Activated T-helper 1 cell treated with anti-CD3 and anti-CD28 coated beads, Interleukin-12 subunit alpha, Interleukin-12 subunit beta, Interleukin-2, Interleukin-4 antibody, amounts not matched to agents 30 ng/mL and 10 ng/mL and 1 ng/mL, durations not matched to agents 14 hours and 24 hours and 36 hours (primary cell): ENCODE measurements at regions of chr19 and their contacts with region 1.

Region 1: GRCh38 chr19:12564016-12564664 is 12.9 kb upstream of the ZNF564 start:
- DNase-seq: peak; percentile 86
- H3K4me3 Mint-ChIP-seq: no peak overlapping the region
- H3K27ac Mint-ChIP-seq: no peak overlapping the region
- H3K4me1 Mint-ChIP-seq: peaks cover 8% of the 10 kb centered on the region
- H3K27me3 Mint-ChIP-seq: no peaks in the 10 kb centered on the region

Region 2: GRCh38 chr19:12527034-12527836 is 36.9 kb before region 1 on chr19:
- intact Hi-C with region 1: no loop called
- DNase-seq: no peak
- H3K4me3 Mint-ChIP-seq: no peak overlapping the region
- H3K27ac Mint-ChIP-seq: no peak overlapping the region
- H3K4me1 Mint-ChIP-seq: no peaks in the 10 kb centered on the region
- H3K27me3 Mint-ChIP-seq: no peaks in the 10 kb centered on the region

Region 3: DNA sequence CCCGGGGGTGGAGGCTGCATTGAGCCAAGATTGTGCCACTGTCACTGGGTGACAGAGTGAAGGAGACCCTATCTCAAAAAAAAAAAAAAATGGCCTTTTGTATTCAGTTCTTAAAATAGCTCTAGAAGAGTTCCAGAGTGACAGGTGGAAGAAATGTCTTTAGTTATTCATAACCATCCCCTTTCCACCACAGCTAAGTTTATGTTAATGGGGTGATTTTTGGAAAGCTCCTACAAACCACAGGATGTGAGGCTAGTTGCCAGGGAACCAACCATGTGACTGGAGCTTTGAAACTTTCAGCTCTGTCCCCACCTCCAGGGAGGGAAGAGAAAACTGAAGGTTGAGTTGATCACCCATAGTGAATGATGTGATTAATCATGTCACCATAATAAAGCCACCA is 39.6 kb after region 1 on chr19:
- intact Hi-C with region 1: loop called (anchors 1 kb)
- DNase-seq: peak; percentile 64
- H3K4me3 Mint-ChIP-seq: no peak overlapping the region
- H3K27ac Mint-ChIP-seq: peak overlapping the region; percentile 67
- H3K4me1 Mint-ChIP-seq: peaks cover 11% of the 10 kb centered on the region
- H3K27me3 Mint-ChIP-seq: no peaks in the 10 kb centered on the region

Region 4: DNA sequence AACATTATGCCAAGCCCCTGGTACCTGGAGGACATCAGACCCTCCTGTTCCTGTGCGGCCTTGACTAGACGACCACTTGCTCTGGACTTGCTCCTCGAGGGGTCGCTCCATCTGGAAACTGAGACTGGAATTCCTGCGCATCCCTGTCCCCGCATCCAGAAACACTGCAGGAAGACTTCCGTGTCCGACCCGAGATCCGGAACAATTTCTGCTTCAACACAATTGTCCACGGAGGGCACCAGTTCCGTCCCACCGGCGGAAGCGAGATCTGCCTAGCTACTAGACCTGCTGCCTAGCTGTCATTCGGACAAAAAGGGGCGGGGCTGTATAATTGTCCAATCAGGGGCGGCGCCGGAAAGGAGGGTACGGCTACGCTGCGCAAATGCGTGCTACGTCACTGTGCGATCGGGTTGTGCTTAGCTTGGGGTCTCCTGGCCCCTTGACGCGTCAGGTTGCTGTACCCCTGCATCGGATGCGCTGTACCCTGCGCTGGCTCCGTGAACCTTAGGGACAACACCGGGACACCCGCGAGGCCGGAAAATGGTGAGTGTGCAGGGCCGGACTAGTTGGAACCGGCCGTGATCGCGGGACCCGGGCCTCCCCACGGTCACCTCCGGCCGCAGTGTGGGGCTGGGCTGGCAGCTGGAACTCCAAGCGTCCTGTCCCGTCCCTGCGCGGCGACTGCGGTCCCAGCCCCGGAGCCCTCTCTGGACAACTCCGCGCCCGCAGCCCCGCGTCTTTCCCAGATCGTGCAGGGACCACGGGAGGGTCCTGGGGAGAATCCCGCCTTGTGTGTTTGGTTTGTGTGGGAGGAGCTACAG is 46.6 kb after region 1 on chr19 and contains the starts of genes ZNF490 and ZNF791:
- intact Hi-C with region 1: loop called (anchors 1 kb)
- DNase-seq: peak; percentile 96
- H3K4me3 Mint-ChIP-seq: peak within 1 kb of the TSS; percentile 100
- H3K27ac Mint-ChIP-seq: peak within 1 kb of the TSS; percentile 99
- H3K4me1 Mint-ChIP-seq: peaks cover 22% of the 10 kb centered on the region
- H3K27me3 Mint-ChIP-seq: no peaks in the 10 kb centered on the region
- total RNA-seq, gene ZNF490: 9.2 and 9.4 TPM in 2 replicates
- total RNA-seq, gene ZNF791: 23.5 and 29.0 TPM in 2 replicates

Region 5: GRCh38 chr19:12639901-12640613 is 75.9 kb after region 1 on chr19:
- intact Hi-C with region 1: loop called (anchors 1 kb)
- DNase-seq: peak; percentile 72
- H3K4me3 Mint-ChIP-seq: peak overlapping the region; percentile 53
- H3K27ac Mint-ChIP-seq: peak overlapping the region; percentile 63
- H3K4me1 Mint-ChIP-seq: peaks cover 13% of the 10 kb centered on the region
- H3K27me3 Mint-ChIP-seq: no peaks in the 10 kb centered on the region

Region 6: DNA sequence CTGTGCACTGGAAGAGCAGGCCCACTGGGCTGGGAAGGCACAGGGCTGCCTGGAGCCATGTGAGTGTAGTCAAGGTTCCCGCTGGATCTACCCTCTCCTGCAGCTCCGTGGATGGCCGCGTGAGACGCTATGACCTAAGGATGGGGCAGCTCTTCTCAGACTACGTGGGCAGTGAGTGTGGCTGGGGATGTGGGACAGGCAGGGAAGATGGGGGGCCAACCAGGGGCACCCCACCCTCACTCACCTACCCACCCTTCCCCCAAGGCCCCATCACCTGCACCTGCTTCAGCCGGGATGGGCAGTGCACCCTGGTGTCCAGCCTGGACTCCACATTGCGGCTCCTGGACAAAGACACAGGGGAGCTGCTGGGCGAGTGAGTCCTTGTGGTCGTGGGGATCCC is 108.6 kb after region 1 on chr19:
- intact Hi-C with region 1: loop called (anchors 1 kb)
- DNase-seq: no peak
- H3K4me3 Mint-ChIP-seq: no peak overlapping the region
- H3K27ac Mint-ChIP-seq: no peak overlapping the region
- H3K4me1 Mint-ChIP-seq: peaks cover 34% of the 10 kb centered on the region
- H3K27me3 Mint-ChIP-seq: no peaks in the 10 kb centered on the region

Region 7: DNA sequence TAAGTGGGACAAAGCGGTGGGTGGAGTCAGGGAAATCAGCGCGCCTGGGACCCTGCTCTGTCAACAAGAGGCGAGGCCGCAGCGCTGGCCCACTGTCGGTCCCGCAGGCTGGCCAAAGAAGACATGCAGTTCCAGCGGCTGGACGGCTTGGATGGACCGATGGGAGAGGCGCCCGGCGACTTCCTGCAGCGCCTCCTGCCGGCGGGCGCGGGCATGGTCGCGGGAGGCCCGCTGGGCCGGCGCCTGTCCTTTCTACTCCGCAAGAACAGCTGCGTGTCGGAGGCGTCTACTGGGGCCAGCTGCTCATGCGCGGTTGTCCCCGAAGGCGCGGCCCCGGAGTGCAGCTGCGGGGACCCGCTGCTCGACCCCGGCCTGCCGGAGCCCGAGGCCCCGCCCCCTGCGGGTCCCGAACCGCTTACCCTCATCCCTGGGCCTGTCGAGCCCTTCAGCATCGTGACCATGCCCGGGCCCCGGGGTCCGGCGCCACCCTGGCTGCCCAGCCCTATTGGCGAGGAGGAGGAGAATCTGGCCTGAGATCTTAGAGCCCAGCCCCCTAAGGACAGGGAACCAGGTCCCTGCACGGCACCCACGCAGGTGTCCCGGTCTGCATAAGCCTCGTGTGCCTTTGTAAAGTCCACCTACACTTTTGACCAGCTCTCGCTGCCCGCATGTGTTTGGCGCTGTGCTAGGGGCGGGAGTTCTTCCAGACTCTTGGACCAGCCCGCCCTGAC is 193.6 kb after region 1 on chr19:
- intact Hi-C with region 1: loop called (anchors 1 kb)
- DNase-seq: peak; percentile 68
- H3K4me3 Mint-ChIP-seq: peak overlapping the region; percentile 53
- H3K27ac Mint-ChIP-seq: no peak overlapping the region
- H3K4me1 Mint-ChIP-seq: peaks cover 5% of the 10 kb centered on the region
- H3K27me3 Mint-ChIP-seq: peaks cover 8% of the 10 kb centered on the region

Region 8: GRCh38 chr19:12847159-12848139 is 283.3 kb after region 1 on chr19:
- intact Hi-C with region 1: loop called (anchors 1 kb)
- DNase-seq: peak; percentile 84
- H3K4me3 Mint-ChIP-seq: peak overlapping the region; percentile 53
- H3K27ac Mint-ChIP-seq: no peak overlapping the region
- H3K4me1 Mint-ChIP-seq: peaks cover 8% of the 10 kb centered on the region
- H3K27me3 Mint-ChIP-seq: peaks cover 12% of the 10 kb centered on the region